ENCODE measurements at regions of chr14 and their contacts with region 1.

Region 1: GRCh38 chr14:77457522-77458290 is at the starts of genes AHSA1 and VIPAS39:
- DNase-seq: peak; percentile 99
- H3K4me3 ChIP-seq: peak within 1 kb of the TSS; percentile 45 to 86 (median 66)
- H3K27ac ChIP-seq: peak within 1 kb of the TSS; percentile 76
- H3K4me1 ChIP-seq: peaks cover 21% of the 10 kb centered on the region
- H3K27me3 ChIP-seq: no peaks in the 10 kb centered on the region
- CTCF ChIP-seq: no peak
- POLR2A ChIP-seq: peak; percentile 53
- total RNA-seq, gene AHSA1: 158 and 166 TPM in 2 replicates
- total RNA-seq, gene VIPAS39: 22.2 and 24.2 TPM in 2 replicates

Region 2: GRCh38 chr14:77097700-77098528 is 359.8 kb before region 1 on chr14 and contains the start of gene CIPC:
- CTCF ChIA-PET with region 1: no interaction called
- POLR2A ChIA-PET with region 1: no interaction called
- dilution Hi-C with region 1: no loop called
- intact Hi-C with region 1: loop called (anchors 5 kb)
- DNase-seq: peak; percentile 99
- H3K4me3 ChIP-seq: peak within 1 kb of the TSS; percentile 30 to 72 (median 66)
- H3K27ac ChIP-seq: peak within 1 kb of the TSS; percentile 57
- H3K4me1 ChIP-seq: peaks cover 27% of the 10 kb centered on the region
- H3K27me3 ChIP-seq: no peaks in the 10 kb centered on the region
- CTCF ChIP-seq: no peak
- POLR2A ChIP-seq: no peak
- total RNA-seq, gene CIPC: 17.4 and 17.7 TPM in 2 replicates

Region 3: DNA sequence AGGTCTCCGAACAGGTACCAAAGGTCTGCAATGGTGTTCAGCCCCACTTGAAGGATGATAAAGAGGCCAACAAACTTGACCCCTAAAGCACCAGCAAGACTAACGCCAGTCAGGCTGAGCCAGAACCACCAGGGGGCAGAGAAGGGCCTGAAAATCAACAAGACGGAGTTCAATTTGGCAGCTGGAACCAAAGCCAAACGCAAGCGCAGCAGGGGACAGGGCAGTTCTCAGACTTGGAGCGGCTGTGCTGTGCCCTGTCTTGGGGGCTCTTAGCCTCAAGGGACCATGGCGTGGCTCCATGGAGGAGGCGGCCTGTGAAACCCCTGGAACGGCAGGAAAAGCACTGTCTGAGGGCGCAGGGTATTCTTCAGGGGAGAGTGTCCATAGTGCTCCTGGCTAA is 156.6 kb before region 1 on chr14:
- CTCF ChIA-PET with region 1: interaction called, 7 read pairs
- POLR2A ChIA-PET with region 1: interaction called, 4 read pairs
- dilution Hi-C with region 1: no loop called
- intact Hi-C with region 1: loop called (anchors 1 kb)
- DNase-seq: peak; percentile 74
- H3K4me3 ChIP-seq: no peak overlapping the region
- H3K27ac ChIP-seq: no peak overlapping the region
- H3K4me1 ChIP-seq: peaks cover 29% of the 10 kb centered on the region
- H3K27me3 ChIP-seq: no peaks in the 10 kb centered on the region
- CTCF ChIP-seq: peak; percentile 85
- POLR2A ChIP-seq: no peak

Region 4: DNA sequence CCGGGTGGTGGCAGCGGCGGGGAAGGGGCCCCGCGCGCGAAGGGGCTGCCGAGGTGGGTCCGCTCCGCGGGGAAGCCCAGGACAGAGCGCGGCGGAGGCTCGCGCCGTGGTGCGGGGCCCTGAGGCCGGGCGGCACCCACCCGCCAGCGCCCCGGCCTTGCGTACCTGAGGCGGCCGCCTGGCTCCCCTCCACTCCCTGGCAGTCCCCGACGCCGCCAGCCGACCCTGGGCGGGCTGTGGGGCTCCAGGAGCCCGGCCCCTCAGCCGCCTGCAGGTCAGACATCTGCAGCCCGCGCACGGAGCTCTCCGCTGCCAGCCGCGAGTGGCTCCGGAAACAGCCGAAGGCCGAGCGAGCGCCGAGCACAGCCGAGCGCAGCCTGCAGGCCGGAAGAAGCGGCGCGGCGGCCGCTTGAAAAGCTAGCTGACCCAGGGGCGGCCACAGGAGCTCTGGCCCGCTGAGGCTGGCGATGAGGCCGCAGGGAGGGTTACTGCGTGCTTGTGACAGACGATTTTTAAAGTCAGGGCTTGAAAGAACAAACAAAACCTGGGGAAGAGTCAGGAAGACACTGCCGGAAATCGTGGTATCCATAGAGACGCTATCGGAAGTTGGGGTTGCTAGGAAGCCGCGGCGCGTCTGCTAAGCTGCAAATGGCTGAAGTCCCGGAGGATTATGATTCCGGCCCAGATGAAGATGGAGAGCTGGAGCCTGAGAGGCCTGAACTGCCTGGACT is 80.8 kb before region 1 on chr14 and contains the starts of genes SAMD15 and TMED8:
- CTCF ChIA-PET with region 1: no interaction called
- POLR2A ChIA-PET with region 1: interaction called, 4 read pairs
- dilution Hi-C with region 1: no loop called
- intact Hi-C with region 1: loop called (anchors 1 kb)
- DNase-seq: peak; percentile 95
- H3K4me3 ChIP-seq: peak within 1 kb of the TSS; percentile 58 to 76 (median 69)
- H3K27ac ChIP-seq: peak within 1 kb of the TSS; percentile 71
- H3K4me1 ChIP-seq: peaks cover 15% of the 10 kb centered on the region
- H3K27me3 ChIP-seq: no peaks in the 10 kb centered on the region
- CTCF ChIP-seq: peak in 1 of 2 donors; percentile 30
- POLR2A ChIP-seq: peak; percentile 58
- total RNA-seq, gene SAMD15: 0.65 and 1.1 TPM in 2 replicates
- total RNA-seq, gene TMED8: 12.6 and 13.5 TPM in 2 replicates

Region 5: DNA sequence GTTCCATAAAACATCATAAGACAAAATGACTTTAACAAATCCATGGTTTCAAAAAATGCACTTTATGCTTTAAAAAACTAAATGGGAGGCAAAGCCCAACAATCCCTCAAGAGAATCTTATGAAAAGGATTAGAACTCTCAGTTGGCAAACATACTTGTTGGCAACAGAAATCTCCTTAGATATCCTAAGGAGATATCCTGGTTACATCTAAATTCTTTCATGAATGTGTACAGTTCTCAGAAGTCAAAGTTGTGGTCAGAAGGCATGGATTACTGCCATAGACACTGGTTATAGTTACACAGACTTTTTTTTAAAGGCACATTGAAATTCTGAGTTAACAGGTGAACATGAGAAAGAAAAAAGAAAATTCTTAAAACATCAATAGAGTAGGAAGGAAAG is 58.4 kb after region 1 on chr14:
- CTCF ChIA-PET with region 1: interaction called, 10 read pairs
- POLR2A ChIA-PET with region 1: no interaction called
- dilution Hi-C with region 1: no loop called
- intact Hi-C with region 1: no loop called
- DNase-seq: no peak
- H3K4me3 ChIP-seq: no peak overlapping the region
- H3K27ac ChIP-seq: no peak overlapping the region
- H3K4me1 ChIP-seq: no peaks in the 10 kb centered on the region
- H3K27me3 ChIP-seq: no peaks in the 10 kb centered on the region
- CTCF ChIP-seq: no peak
- POLR2A ChIP-seq: no peak

Region 6: GRCh38 chr14:77554207-77554606 is 96.5 kb after region 1 on chr14:
- CTCF ChIA-PET with region 1: interaction called, 75 read pairs
- POLR2A ChIA-PET with region 1: no interaction called
- dilution Hi-C with region 1: no loop called
- intact Hi-C with region 1: loop called (anchors 1 kb)
- DNase-seq: no peak
- H3K4me3 ChIP-seq: no peak overlapping the region
- H3K27ac ChIP-seq: no peak overlapping the region
- H3K4me1 ChIP-seq: no peaks in the 10 kb centered on the region
- H3K27me3 ChIP-seq: no peaks in the 10 kb centered on the region
- CTCF ChIP-seq: no peak
- POLR2A ChIP-seq: no peak

Region 7: DNA sequence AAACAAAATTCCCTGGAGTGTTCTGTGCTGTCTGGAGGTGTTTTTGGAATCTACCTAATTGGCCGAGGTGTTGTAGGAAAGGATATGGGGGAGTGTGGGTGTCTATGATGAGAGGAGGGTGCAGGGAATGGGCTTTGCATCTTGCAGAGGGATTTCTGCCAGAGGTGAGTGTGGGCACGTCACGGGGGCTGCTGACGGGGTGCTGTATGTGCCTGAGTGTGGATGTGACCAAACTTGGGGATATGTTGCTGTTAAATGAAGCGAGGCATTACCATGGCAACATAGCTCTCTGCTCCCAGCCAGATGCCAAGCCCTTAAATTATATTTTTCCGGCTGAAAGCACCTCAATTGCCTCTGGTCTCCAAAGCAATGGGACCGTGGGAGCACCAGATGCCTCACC is 203.0 kb after region 1 on chr14:
- CTCF ChIA-PET with region 1: no interaction called
- POLR2A ChIA-PET with region 1: no interaction called
- dilution Hi-C with region 1: no loop called
- intact Hi-C with region 1: loop called (anchors 5 kb)
- DNase-seq: no peak
- H3K4me3 ChIP-seq: no peak overlapping the region
- H3K27ac ChIP-seq: no peak overlapping the region
- H3K4me1 ChIP-seq: peaks cover 12% of the 10 kb centered on the region
- H3K27me3 ChIP-seq: no peaks in the 10 kb centered on the region
- CTCF ChIP-seq: no peak
- POLR2A ChIP-seq: no peak